Activated naive CD4-positive, alpha-beta T cell treated with anti-CD3 and anti-CD28 coated beads for 36 hours (primary cell): ENCODE measurements at regions of chr14 and their contacts with region 1.

Region 1: DNA sequence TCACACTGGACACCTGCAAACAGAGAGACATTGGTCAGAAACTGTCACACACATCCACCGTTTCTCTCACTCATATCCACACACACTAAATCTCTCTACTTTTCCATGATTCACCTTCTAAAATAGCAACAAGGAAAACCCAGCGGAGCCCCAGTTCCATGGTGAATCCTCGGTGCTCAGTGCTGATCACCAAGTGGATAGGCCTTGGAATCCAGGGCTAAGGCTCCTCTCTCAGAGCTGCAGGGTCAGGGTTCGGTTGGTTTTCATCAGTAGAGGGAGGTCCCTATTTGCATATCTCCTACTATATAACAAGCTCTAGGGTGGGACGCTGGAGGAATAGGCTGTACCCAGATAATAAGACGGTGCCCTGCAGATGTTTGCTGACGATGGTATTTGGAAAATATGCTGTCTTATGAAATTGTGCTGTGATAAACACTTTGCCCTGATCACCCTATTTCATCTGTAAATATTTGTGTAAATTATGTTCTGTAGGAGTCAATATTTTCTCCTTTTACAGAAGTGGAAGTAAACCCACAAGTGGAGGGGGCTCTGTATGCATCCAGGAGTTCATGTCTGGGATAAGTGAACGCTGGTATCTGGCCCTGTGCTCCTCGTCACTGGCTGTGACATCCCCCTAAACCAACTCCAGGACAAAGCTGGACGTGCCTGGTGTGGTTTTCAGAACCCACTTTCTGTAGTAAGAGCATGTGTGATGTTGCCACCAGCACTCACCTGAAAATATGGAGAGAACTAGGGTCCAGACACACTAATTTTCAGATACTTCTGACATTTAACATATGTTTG is 709.2 kb downstream of the TMEM121 start:
- DNase-seq: no peak
- H3K4me3 Mint-ChIP-seq: no peak overlapping the region
- H3K27ac Mint-ChIP-seq: peak overlapping the region; percentile 22
- H3K4me1 Mint-ChIP-seq: peaks cover 26% of the 10 kb centered on the region
- H3K27me3 Mint-ChIP-seq: no peaks in the 10 kb centered on the region

Region 2: DNA sequence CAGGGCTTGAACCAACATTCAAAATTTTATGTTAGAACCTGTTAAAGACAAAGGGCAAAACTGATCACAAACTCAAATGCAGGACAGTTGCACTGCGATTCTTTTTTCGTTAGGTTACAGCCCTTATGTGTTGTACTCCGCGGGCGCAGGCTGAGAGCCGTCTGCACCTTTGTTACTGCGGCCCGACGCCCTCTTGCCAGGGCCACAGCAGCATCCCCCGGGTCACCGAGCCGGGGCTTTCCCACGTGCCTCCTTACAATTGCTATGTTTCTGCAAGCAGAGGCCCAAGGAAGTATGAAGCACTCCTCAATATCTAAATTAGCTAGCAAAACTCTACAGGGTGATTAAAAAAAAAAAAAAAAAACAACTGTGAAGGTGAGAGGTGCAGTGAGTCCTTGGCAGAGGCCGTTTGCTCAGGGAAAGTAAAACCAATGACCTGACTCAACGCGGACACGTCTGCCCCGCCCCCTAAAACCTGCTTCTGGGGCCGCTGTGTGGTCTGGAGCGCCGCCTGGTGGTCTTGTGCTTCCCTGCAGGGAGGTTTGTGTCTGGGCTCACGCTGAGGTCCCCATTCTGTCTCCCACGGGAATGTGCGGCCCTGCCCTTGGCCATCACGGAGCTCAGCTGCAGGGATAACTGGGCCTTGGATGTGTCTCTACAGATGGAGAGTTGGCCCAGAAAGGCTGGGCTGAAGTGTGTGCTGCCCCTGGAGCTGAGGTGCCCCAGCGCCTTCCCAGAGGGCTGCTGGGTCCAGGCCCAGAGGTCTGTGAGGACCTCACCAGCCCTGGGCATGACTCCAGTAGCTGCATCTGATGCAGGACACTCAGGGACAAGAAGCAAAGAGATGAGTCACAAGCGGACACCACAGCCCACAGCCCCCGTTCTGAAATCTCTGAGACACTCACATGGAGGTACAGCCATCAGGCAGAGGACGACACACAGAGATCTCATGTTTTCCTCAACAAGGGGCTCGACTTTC is 290.6 kb before region 1 on chr14:
- CTCF ChIA-PET with region 1: no interaction called
- intact Hi-C with region 1: no loop called
- DNase-seq: peak; percentile 91
- H3K4me3 Mint-ChIP-seq: no peak overlapping the region
- H3K27ac Mint-ChIP-seq: no peak overlapping the region
- H3K4me1 Mint-ChIP-seq: peaks cover 8% of the 10 kb centered on the region
- H3K27me3 Mint-ChIP-seq: no peaks in the 10 kb centered on the region

Region 3: DNA sequence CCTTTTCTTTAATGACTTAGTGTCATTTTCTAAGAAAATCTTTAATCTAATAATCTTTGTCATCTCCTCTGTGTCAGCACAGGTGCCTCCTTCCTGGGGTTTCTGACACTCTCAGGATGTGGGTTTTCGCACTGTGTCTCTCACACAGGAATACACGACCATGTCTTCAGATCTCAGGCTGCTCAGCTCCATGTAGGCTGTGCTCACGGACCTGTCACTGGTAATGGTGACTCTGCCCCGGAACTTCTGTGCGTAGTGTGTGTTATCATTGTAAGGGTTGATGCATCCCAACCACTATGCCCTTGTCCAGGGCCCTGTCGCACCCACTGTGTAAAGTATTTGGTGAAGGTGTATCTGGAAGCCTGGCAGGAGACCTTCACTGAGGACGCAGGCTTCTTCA is 61.4 kb before region 1 on chr14:
- CTCF ChIA-PET with region 1: no interaction called
- intact Hi-C with region 1: no loop called
- DNase-seq: peak; percentile 78
- H3K4me3 Mint-ChIP-seq: peak overlapping the region; percentile 25
- H3K27ac Mint-ChIP-seq: no peak overlapping the region
- H3K4me1 Mint-ChIP-seq: peaks cover 54% of the 10 kb centered on the region
- H3K27me3 Mint-ChIP-seq: no peaks in the 10 kb centered on the region

Region 4: GRCh38 chr14:106210652-106211051 is 24.9 kb before region 1 on chr14:
- CTCF ChIA-PET with region 1: interaction called, 36 read pairs
- intact Hi-C with region 1: loop called (anchors 1 kb)
- DNase-seq: peak; percentile 77
- H3K4me3 Mint-ChIP-seq: no peak overlapping the region
- H3K27ac Mint-ChIP-seq: no peak overlapping the region
- H3K4me1 Mint-ChIP-seq: peaks cover 21% of the 10 kb centered on the region
- H3K27me3 Mint-ChIP-seq: no peaks in the 10 kb centered on the region